ENCODE measurements at regions of chr2 and their contacts with region 1.

Region 1: DNA sequence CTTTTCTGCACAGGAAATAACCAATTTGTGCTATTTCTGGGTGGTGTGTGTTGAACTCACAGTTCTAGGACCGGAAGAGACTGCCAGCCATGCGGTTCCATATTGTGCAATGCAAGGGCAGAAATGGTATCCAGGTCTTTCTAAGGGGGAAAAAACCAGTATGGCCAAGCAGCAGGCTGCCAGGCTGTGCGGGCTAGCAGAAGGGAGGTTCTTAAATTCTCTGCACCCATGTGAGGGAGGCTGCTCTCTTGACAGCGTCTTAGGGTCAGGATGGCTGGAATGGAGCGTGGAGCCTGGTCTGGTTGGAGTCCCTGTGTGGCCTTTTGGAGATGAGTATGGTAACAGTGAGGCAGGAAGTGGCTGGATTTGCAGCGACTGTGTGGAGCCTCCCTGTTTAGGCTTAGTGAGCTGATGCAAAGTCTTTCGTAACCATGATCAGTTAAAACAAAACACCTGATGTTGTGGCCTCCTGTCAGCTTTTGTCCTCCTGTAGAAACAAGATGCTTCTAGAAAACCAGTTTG is 52.6 kb downstream of the NCK2 start:
- DNase-seq: peak; percentile 75
- ATAC-seq: peak; percentile 46
- H3K4me3 Mint-ChIP-seq: peak overlapping the region; percentile 71
- H3K27ac Mint-ChIP-seq: peak overlapping the region; percentile 97
- H3K4me1 Mint-ChIP-seq: peaks cover 90% of the 10 kb centered on the region
- H3K27me3 Mint-ChIP-seq: no peaks in the 10 kb centered on the region

Region 2: GRCh38 chr2:105754011-105754410 is 43.3 kb before region 1 on chr2:
- CTCF ChIA-PET with region 1: interaction called, 5 read pairs
- POLR2A ChIA-PET with region 1: interaction called, 34 read pairs
- DNase-seq: peak; percentile 71
- ATAC-seq: peak; percentile 59
- H3K4me3 Mint-ChIP-seq: peak overlapping the region; percentile 35
- H3K27ac Mint-ChIP-seq: peak overlapping the region; percentile 88
- H3K4me1 Mint-ChIP-seq: peaks cover 91% of the 10 kb centered on the region
- H3K27me3 Mint-ChIP-seq: no peaks in the 10 kb centered on the region

Region 3: DNA sequence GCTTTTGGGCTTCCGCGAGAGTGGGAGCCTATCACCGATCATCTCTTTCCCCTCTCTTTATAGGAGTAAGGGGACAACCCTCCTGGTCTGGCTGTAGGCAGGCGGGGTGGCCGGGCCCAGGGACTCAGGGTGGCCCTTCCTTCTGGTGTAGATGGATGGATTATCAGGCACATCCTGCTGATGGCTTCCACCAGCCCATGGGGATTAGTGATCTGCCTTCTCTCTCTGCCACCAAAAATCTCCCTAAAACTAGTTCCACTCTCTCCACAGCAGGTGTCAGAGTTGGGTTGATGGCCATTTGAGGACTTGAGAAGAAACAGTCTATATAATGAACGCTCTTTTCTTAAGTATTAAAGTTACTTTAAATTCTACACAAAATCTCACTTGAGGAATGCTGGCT is 15.2 kb before region 1 on chr2:
- CTCF ChIA-PET with region 1: interaction called, 54 read pairs
- POLR2A ChIA-PET with region 1: interaction called, 11 read pairs
- DNase-seq: no peak
- ATAC-seq: no peak
- H3K4me3 Mint-ChIP-seq: peak overlapping the region; percentile 40
- H3K27ac Mint-ChIP-seq: peak overlapping the region; percentile 72
- H3K4me1 Mint-ChIP-seq: peaks cover 90% of the 10 kb centered on the region
- H3K27me3 Mint-ChIP-seq: no peaks in the 10 kb centered on the region

Region 4: DNA sequence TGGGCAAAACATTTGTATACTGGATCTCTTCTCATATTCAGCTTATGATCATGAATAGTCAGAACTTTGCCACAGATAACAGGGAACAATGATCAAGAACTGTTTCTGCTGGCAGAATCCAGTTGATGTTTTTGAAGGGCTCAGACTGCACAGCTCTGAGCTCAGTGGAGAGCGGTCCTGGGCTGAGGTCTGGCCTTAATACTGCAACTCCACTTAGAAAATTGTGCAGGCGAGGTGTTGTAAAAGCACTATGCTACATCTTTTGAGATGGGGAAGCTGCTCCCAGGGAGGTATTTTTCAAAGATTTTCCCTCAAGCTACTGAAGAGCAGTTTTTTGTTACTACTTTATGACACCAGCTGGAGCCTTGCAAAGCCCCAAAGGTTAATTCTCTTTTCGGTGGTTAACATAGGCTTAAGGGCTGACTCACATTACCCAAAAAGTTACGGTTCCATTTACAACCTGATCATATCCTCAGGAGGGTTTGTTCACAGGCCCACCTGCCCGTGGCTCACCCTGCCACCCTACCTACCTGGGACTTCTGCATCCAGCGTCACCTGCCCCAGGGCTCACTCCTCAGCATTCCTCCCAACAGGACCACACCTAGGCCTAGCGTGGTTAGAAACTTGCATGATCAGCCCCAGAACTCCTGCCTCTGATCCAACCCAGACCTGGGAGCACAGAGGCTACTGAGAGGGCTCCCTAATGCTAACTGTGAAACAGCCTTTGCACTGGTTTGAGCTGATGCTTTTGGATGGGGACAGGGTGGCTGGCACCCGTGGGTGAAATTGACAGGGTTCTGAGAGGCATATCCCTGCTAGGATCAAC is 61.7 kb after region 1 on chr2:
- CTCF ChIA-PET with region 1: interaction called, 10 read pairs
- POLR2A ChIA-PET with region 1: interaction called, 6 read pairs
- DNase-seq: peak; percentile 36
- ATAC-seq: peak; percentile 44
- H3K4me3 Mint-ChIP-seq: peak overlapping the region; percentile 8
- H3K27ac Mint-ChIP-seq: peak overlapping the region; percentile 83
- H3K4me1 Mint-ChIP-seq: peaks cover 93% of the 10 kb centered on the region
- H3K27me3 Mint-ChIP-seq: no peaks in the 10 kb centered on the region

Region 5: DNA sequence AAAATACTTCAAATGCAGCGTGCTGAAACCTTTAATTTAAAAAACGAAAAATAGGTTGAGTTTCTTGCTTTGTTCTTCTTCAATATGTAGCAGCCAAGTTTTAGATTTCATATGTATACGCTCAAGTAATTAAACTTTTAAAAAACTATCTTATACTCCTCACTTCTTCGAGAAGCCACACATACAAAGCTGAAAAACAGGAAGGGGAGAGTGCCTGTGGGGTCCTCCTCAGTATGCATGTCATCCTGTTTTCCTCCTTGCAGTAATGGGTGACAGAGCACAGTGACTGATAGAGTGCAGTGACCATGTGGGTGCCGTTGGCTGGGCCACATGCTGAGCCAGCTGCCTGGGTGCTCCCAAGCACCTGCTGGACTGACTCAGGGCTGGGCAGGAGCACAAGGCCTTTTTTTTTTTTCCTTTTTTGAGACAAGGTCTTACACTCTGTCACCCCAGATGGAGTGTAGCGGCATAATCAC is 363.5 kb after region 1 on chr2:
- CTCF ChIA-PET with region 1: no interaction called
- POLR2A ChIA-PET with region 1: interaction called, 11 read pairs
- DNase-seq: peak; percentile 66
- ATAC-seq: peak; percentile 63
- H3K4me3 Mint-ChIP-seq: peak overlapping the region; percentile 91
- H3K27ac Mint-ChIP-seq: peak overlapping the region; percentile 98
- H3K4me1 Mint-ChIP-seq: peaks cover 80% of the 10 kb centered on the region
- H3K27me3 Mint-ChIP-seq: no peaks in the 10 kb centered on the region

Measured in activated CD8-positive, alpha-beta T cell treated with anti-CD3 and anti-CD28 coated beads, Interleukin-2, amount 10 ng/mL, durations not matched to agents 7 days and 5 days (primary cell).